Naive thymus-derived CD4-positive, alpha-beta T cell (primary cell): ENCODE measurements at regions of chr16 and their contacts with region 1.

Region 1: DNA sequence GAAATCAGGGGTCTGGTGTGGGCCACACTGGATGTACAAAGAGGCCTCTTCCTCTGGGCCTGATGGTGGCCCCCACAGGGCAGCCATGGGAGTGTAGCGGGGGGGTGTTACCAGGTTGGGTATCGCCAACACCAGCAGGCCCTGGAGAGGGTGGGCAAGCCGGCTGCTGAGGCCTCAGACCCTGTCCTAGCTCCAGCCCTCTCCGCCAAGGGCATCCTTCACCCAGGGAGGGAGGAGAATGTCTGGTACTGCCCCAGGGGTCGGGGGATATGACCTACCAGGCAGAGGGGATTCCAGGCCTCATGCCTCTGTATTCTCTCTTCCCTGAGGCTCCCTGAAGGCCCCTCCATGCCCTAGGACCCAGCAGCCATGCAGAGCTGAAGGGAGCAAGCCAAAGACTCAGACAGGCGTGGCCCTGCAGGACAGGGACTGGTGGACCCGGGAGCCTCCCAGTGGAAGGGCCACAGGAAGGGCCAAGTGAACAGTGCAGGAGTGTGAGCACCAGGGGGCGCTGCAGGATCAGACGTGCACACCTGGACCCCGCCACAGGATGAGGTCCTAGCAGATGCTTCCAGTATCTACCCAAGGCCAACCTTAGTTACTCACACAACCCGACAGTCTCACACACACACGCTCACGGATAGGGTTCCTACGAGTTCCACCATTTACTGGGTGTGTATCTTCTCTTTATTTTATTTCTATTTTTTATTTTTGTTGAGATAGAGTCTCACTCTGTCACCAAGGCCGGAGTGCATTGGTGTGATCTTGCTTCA is 10.9 kb upstream of the CES4A start:
- DNase-seq: peak; percentile 69 to 92 (median 82)
- ATAC-seq: peak; percentile 99
- H3K4me3 ChIP-seq: no peak overlapping the region
- H3K4me3 Mint-ChIP-seq: peak overlapping the region in 1 of 10 donors; percentile 12
- H3K27ac ChIP-seq: no peak overlapping the region
- H3K27ac Mint-ChIP-seq: peak overlapping the region in 2 of 9 donors; percentile 42 to 86
- H3K4me1 ChIP-seq: no peaks in the 10 kb centered on the region
- H3K4me1 Mint-ChIP-seq: peaks cover 4 to 69% (median 11%) of the 10 kb centered on the region in 7 donors
- H3K27me3 ChIP-seq: no peaks in the 10 kb centered on the region
- H3K27me3 Mint-ChIP-seq: peaks cover 0 to 3% (median 0%) of the 10 kb centered on the region in 5 donors

Region 2: DNA sequence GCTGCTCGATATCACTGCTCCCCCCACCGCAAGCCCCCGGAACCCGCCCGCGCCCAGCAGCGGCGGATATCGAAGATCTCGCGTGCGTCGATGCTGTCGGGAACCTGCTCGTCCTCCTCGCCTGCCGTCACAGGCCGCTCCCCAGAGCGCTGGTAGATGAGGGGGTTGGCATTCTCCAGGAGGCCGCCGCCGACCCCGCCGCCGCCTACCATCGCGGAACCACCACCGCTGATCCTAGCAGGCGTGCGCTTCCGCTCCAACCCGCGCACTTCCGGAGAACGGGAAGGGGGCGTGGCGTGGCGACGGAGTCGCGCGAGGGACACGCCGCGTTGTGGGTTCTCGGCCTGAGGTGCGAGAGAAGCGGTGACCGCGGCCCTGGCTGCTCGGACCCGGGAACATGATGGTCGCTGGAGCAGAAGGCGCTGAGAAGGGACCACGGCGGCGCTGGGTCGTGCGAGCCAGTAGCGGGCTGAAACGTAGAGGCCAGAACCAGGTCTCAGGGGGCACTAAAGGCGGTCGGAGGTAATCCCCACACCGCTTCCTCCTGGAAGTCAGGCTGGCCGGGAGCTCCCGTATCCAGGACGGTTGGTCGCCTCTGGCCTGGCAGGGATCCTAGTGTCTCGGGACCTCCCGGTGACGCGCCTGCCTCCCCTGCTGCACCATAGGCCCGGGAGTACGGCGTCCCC is 43.2 kb before region 1 on chr16 and contains the start of gene CIAO2B:
- CTCF ChIA-PET with region 1: no interaction called
- POLR2A ChIA-PET with region 1: no interaction called
- intact Hi-C with region 1: no loop called
- DNase-seq: peak; percentile 86 to 95 (median 91)
- ATAC-seq: peak; percentile 93
- H3K4me3 ChIP-seq: peak within 1 kb of the TSS; percentile 96
- H3K4me3 Mint-ChIP-seq: peak within 1 kb of the TSS; percentile 91 to 99 (median 98)
- H3K27ac ChIP-seq: peak within 1 kb of the TSS; percentile 97
- H3K27ac Mint-ChIP-seq: peak within 1 kb of the TSS; percentile 96 to 99 (median 98)
- H3K4me1 ChIP-seq: peaks cover 24 to 35% of the 10 kb centered on the region in 2 donors
- H3K4me1 Mint-ChIP-seq: peaks cover 38 to 63% (median 54%) of the 10 kb centered on the region in 7 donors
- H3K27me3 ChIP-seq: no peaks in the 10 kb centered on the region
- H3K27me3 Mint-ChIP-seq: no peaks in the 10 kb centered on the region
- total RNA-seq, gene CIAO2B: 47.0 to 116 (median 58.5) TPM

Region 3: DNA sequence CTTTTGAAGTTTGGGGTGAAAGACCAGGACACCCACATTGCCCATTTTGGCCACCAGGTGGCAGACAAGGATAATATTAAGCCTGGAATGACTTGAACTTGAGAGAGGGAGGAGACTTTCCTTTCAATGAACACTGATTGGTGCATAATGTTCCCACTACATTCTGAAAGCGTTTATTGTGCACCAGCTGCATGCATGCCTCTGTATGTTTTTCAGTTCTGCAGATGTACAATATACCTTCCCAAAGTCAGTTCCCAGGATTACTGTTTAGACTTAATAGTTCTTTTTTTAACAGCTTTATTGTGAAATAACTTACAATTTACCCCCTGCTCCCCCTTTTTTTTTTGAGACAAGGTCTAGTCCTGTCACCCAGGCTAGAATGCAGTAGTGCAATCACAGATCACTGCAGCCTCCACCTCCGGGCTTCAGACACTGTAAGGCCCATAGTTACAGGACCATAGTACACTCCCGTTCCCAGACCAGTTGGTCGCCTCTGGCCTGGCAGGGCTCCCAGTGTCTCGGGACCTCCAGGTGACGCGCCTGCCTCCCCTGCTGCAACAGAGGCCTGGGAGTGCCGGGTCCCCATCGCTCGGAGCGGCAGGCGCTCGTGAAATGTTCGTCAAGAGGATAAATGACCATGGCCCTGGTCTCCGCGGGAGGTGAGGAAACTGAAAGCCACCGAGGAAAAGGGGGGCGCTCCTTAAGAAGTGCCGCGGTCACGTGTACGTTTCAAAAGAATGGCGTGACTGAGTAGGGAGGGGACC is 30.0 kb before region 1 on chr16:
- CTCF ChIA-PET with region 1: interaction called, 3 read pairs
- POLR2A ChIA-PET with region 1: no interaction called
- intact Hi-C with region 1: loop called in 1 of 2 experiments (anchors 1 kb)
- DNase-seq: peak; percentile 64 to 86 (median 80)
- ATAC-seq: peak; percentile 97
- H3K4me3 ChIP-seq: peak overlapping the region; percentile 45
- H3K4me3 Mint-ChIP-seq: peak overlapping the region; percentile 83 to 95 (median 92)
- H3K27ac ChIP-seq: peak overlapping the region; percentile 26
- H3K27ac Mint-ChIP-seq: peak overlapping the region in 3 of 9 donors; percentile 13 to 50 (median 29)
- H3K4me1 ChIP-seq: peaks cover 0 to 4% of the 10 kb centered on the region in 2 donors
- H3K4me1 Mint-ChIP-seq: peaks cover 13 to 24% (median 18%) of the 10 kb centered on the region in 7 donors
- H3K27me3 ChIP-seq: no peaks in the 10 kb centered on the region
- H3K27me3 Mint-ChIP-seq: peaks cover 23 to 39% (median 32%) of the 10 kb centered on the region in 5 donors

Region 4: DNA sequence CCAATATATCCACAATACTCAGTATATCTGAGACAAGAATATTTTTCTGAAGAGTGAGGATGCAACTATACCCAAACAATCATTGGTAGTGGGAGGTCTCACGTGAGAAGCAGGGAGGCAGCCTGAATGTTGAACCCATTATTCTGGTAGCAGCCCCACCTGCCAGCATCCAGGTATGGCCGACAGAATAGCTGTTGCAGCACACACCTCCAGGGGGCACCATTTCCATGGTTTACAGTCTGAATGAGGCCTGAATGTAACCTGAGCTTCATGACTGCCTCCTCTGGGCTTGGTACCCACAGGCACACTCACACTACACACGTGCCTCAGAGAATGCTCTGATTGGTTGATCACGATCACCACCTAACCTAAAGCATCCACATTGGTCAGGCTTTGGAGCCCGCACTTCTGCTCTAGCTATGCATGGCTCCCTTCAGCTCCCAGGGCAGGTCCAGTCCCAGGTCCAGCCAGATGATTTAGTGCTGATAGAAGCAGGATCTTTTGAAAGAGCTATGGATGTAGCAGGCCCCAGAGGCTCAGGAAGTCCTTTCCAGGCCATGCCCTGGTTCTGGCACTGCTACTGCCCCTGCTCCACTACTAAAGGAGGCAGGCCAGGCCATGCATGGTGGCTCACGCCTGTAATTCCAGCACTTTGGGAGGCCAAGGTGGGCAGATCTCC is 40.4 kb after region 1 on chr16:
- CTCF ChIA-PET with region 1: interaction called, 4 read pairs
- POLR2A ChIA-PET with region 1: no interaction called
- intact Hi-C with region 1: loop called (anchors 1 to 5 kb)
- DNase-seq: peak; percentile 58 to 87 (median 84)
- ATAC-seq: peak; percentile 96
- H3K4me3 ChIP-seq: no peak overlapping the region
- H3K4me3 Mint-ChIP-seq: peak overlapping the region in 2 of 10 donors; percentile 16 to 21
- H3K27ac ChIP-seq: no peak overlapping the region
- H3K27ac Mint-ChIP-seq: peak overlapping the region in 2 of 9 donors; percentile 43 to 75
- H3K4me1 ChIP-seq: peaks cover 4 to 11% of the 10 kb centered on the region in 2 donors
- H3K4me1 Mint-ChIP-seq: peaks cover 0 to 55% (median 8%) of the 10 kb centered on the region in 7 donors
- H3K27me3 ChIP-seq: no peaks in the 10 kb centered on the region
- H3K27me3 Mint-ChIP-seq: no peaks in the 10 kb centered on the region

Region 5: DNA sequence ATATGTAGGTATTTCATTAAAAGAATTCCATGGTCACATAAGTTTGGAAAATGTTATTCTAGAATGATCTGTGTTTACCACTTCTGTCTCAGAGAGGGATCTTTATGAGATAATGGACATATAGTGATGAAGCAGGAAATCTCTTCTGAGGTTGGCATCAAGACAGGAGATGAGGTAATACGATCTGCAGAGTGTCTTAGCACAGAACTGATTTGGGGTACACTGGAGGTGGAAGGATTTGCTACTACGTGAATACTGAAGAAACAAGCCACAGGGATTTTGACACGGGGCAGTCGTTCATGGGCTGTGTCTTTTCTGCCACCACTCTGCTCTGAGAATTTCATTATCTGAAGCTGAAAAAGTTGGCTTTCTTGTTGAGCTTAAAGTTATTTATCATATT is 57.0 kb after region 1 on chr16:
- CTCF ChIA-PET with region 1: no interaction called
- POLR2A ChIA-PET with region 1: no interaction called
- intact Hi-C with region 1: no loop called
- DNase-seq: no peak
- ATAC-seq: no peak
- H3K4me3 ChIP-seq: no peak overlapping the region
- H3K4me3 Mint-ChIP-seq: peak overlapping the region in 9 of 10 donors; percentile 7 to 66 (median 42)
- H3K27ac ChIP-seq: no peak overlapping the region
- H3K27ac Mint-ChIP-seq: peak overlapping the region in 4 of 9 donors; percentile 3 to 48 (median 10)
- H3K4me1 ChIP-seq: peaks cover 15 to 24% of the 10 kb centered on the region in 2 donors
- H3K4me1 Mint-ChIP-seq: peaks cover 31 to 72% (median 55%) of the 10 kb centered on the region in 7 donors
- H3K27me3 ChIP-seq: no peaks in the 10 kb centered on the region
- H3K27me3 Mint-ChIP-seq: no peaks in the 10 kb centered on the region

Region 6: DNA sequence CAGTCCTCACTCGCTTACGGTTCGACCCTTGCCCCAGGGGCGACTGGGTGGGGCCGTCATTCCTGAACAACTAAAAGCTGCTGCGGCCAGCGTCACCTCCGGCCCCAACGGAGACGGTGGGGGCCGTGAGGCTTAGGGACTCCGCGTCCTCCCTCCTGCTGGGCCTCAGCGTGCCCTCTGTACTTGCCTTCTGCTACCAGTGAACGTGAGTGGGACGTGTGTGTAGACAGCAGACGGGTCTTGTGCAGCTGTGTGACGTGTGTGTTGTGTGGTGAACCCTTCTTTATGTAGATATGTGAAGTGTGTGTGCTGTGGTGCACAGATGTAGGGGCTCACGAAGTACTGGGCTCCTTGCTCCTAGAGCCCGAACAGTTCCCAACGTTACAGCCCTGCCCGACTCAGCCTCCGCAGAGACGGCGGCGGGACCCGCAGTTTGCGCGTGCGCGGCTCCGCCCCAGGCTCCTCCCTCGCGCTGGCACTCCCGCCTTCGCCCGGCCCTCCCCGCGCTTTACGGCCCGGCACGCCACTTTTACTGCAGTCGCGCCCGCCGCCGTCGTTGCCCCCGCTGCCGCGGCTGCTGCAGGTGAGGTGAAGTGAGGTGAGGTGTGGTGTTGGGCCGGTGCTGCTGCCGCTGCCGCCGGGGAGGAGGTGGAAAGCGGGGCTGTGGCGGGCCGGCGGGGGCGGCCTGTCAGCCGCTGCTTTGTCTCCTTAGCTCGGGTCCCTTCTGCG is 132.0 kb after region 1 on chr16 and contains the start of gene PHAF1:
- CTCF ChIA-PET with region 1: interaction called, 3 read pairs
- POLR2A ChIA-PET with region 1: no interaction called
- intact Hi-C with region 1: loop called in 1 of 2 experiments (anchors 2 kb)
- DNase-seq: peak; percentile 93 to 99 (median 97)
- ATAC-seq: peak; percentile 95
- H3K4me3 ChIP-seq: peak within 1 kb of the TSS; percentile 91
- H3K4me3 Mint-ChIP-seq: peak within 1 kb of the TSS; percentile 91 to 96 (median 94)
- H3K27ac ChIP-seq: peak within 1 kb of the TSS; percentile 78
- H3K27ac Mint-ChIP-seq: peak within 1 kb of the TSS; percentile 81 to 95 (median 87)
- H3K4me1 ChIP-seq: peaks cover 9 to 11% of the 10 kb centered on the region in 2 donors
- H3K4me1 Mint-ChIP-seq: peaks cover 19 to 43% (median 31%) of the 10 kb centered on the region in 7 donors
- H3K27me3 ChIP-seq: no peaks in the 10 kb centered on the region
- H3K27me3 Mint-ChIP-seq: no peaks in the 10 kb centered on the region
- total RNA-seq, gene PHAF1: 17.8 to 29.6 (median 21.2) TPM

Region 7: DNA sequence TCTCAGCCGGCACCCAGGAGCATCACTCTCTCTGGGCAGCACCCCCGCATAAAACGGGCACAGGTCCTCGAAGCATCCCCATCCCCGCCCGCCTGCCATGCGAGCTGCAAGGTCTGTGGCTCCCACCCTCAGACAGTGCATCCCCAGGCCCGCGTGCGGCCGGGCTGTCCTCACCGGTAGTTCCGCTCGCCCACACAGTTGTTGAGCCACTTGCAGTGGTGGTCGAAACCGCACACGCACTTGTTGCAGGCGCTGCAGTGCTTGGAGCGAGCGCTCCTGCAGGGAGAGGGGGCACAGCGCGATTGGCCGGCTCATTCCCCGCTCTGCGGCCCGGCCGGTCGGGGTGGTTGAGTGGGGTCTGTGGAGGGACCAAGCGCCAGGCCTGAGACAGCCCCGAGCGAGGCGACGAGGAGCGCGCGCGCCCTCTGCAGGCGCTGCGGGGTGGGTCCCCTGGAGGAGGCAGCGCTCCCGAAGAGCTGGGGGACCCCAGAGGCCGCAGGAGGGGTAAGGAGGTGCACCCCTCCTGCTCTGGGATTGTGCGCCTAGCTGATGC is 421.7 kb after region 1 on chr16:
- CTCF ChIA-PET with region 1: interaction called, 3 read pairs
- POLR2A ChIA-PET with region 1: no interaction called
- intact Hi-C with region 1: loop called in 1 of 2 experiments (anchors 1 kb)
- DNase-seq: peak in 6 of 9 donors; percentile 29 to 69 (median 46)
- ATAC-seq: peak; percentile 77
- H3K4me3 ChIP-seq: no peak overlapping the region
- H3K4me3 Mint-ChIP-seq: no peak overlapping the region
- H3K27ac ChIP-seq: no peak overlapping the region
- H3K27ac Mint-ChIP-seq: no peak overlapping the region
- H3K4me1 ChIP-seq: no peaks in the 10 kb centered on the region
- H3K4me1 Mint-ChIP-seq: peaks cover under 1 to 3% (median under 1%) of the 10 kb centered on the region in 7 donors
- H3K27me3 ChIP-seq: peaks cover 0 to 1% of the 10 kb centered on the region in 2 donors
- H3K27me3 Mint-ChIP-seq: peaks cover 6 to 26% (median 19%) of the 10 kb centered on the region in 5 donors

Region 8: GRCh38 chr16:67470359-67470758 is 492.8 kb after region 1 on chr16:
- CTCF ChIA-PET with region 1: no interaction called
- POLR2A ChIA-PET with region 1: no interaction called
- intact Hi-C with region 1: loop called in 1 of 2 experiments (anchors 1 kb)
- DNase-seq: no peak
- ATAC-seq: no peak
- H3K4me3 ChIP-seq: no peak overlapping the region
- H3K4me3 Mint-ChIP-seq: no peak overlapping the region
- H3K27ac ChIP-seq: no peak overlapping the region
- H3K27ac Mint-ChIP-seq: no peak overlapping the region
- H3K4me1 ChIP-seq: peaks cover 0 to 13% of the 10 kb centered on the region in 2 donors
- H3K4me1 Mint-ChIP-seq: peaks cover 10 to 70% (median 54%) of the 10 kb centered on the region in 7 donors
- H3K27me3 ChIP-seq: no peaks in the 10 kb centered on the region
- H3K27me3 Mint-ChIP-seq: no peaks in the 10 kb centered on the region